T-cell (primary cell): ENCODE measurements at regions of chr2 and their contacts with region 1.

Region 1: GRCh38 chr2:42132966-42133641 is 36.0 kb upstream of the EML4 start:
- DNase-seq: peak; percentile 74 to 95 (median 89)
- ATAC-seq: peak; percentile 88 to 92 (median 90)
- H3K4me3 ChIP-seq: peak overlapping the region; percentile 38 to 42
- H3K4me3 Mint-ChIP-seq: peak overlapping the region; percentile 66 to 74 (median 71)
- H3K27ac ChIP-seq: peak overlapping the region; percentile 99
- H3K27ac Mint-ChIP-seq: peak overlapping the region; percentile 99
- H3K4me1 ChIP-seq: peaks cover 72 to 91% of the 10 kb centered on the region in 2 experiments
- H3K4me1 Mint-ChIP-seq: peaks cover 90 to 98% (median 94%) of the 10 kb centered on the region in 3 donors
- H3K27me3 ChIP-seq: no peaks in the 10 kb centered on the region
- H3K27me3 Mint-ChIP-seq: no peaks in the 10 kb centered on the region

Region 2: DNA sequence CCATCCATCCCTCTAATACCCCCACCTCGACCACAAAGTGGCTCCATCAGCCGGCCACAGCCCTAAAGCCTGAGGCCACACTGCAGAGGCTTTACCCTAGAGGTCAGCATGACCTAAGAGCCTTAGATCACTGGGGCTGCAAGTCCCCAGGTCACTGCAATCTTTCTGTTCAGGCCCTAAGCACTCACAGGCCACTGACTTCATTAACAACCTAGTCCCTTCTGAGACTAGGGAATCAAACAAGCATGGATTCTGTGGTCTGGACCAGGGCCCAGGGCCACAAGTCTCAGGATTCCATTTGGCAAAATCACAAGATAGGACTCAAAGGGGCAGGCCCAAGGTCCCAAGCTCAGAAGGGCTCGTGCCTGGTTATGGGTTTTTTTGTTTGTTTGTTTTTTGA is 122.3 kb before region 1 on chr2:
- CTCF ChIA-PET with region 1: no interaction called
- POLR2A ChIA-PET with region 1: no interaction called
- DNase-seq: no peak
- ATAC-seq: no peak
- H3K4me3 ChIP-seq: no peak overlapping the region
- H3K4me3 Mint-ChIP-seq: no peak overlapping the region
- H3K27ac ChIP-seq: no peak overlapping the region
- H3K27ac Mint-ChIP-seq: no peak overlapping the region
- H3K4me1 ChIP-seq: peaks cover 0 to 14% of the 10 kb centered on the region in 2 experiments
- H3K4me1 Mint-ChIP-seq: peaks cover 16 to 21% (median 20%) of the 10 kb centered on the region in 3 donors
- H3K27me3 ChIP-seq: peaks cover 0 to 13% of the 10 kb centered on the region in 2 experiments
- H3K27me3 Mint-ChIP-seq: peaks cover 9 to 10% of the 10 kb centered on the region in 2 donors

Region 3: GRCh38 chr2:42102024-42102590 is 31.0 kb before region 1 on chr2:
- CTCF ChIA-PET with region 1: interaction called, 4 to 42 read pairs
- POLR2A ChIA-PET with region 1: interaction called, 4 to 38 read pairs
- DNase-seq: peak; percentile 79 to 98 (median 96)
- ATAC-seq: peak; percentile 68 to 81 (median 70)
- H3K4me3 ChIP-seq: peak overlapping the region in 1 of 2 donors; percentile 46
- H3K4me3 Mint-ChIP-seq: peak overlapping the region in 2 of 3 donors; percentile 83
- H3K27ac ChIP-seq: peak overlapping the region; percentile 99
- H3K27ac Mint-ChIP-seq: no peak overlapping the region
- H3K4me1 ChIP-seq: peaks cover 66 to 97% of the 10 kb centered on the region in 2 experiments
- H3K4me1 Mint-ChIP-seq: peaks cover 48% of the 10 kb centered on the region in 3 donors
- H3K27me3 ChIP-seq: no peaks in the 10 kb centered on the region
- H3K27me3 Mint-ChIP-seq: no peaks in the 10 kb centered on the region

Region 4: DNA sequence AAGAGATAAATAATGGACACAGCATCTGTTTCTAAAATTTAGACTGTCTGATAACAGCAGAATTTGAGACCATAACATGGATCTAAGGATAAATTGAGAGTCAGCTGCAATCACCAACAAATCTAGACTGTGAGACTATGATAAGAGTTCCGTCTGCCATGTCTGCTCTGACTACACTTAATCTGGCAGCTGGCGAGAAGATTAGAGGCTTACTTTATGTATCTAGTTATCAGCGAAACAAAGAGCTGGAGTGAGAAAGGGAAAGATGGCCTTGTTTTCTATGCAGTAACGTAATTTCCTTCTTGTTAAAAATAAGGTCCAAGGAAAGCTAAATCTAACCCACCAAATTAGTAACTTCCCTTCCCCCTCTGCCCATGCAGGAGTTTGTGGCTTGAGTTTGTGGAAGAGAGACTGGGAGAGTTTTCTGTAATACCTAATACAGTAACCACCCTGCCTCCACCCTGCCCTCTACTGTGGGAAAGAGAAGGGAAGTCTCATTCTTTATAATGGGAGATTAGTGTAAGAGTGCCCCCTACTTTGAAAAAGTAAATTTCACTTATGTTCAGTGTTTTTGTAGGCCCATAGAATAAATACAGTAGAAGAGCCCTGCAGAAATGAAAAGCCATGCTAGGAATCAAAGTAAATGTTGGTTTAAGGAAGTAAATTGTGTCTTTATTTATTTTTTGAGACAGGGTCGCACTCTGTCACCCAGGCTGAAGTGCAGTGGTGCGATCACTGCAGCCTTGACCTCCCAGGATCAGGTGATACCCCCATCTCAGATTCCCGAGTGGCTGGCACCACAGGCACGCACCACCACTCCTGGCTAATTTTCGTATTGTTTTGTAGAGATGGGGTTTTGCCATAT is 63.5 kb after region 1 on chr2:
- CTCF ChIA-PET with region 1: interaction called, 5 to 14 read pairs
- POLR2A ChIA-PET with region 1: interaction called in 1 of 2 experiments, 3 read pairs
- DNase-seq: peak in 34 of 35 experiments; percentile 4 to 72 (median 36)
- ATAC-seq: peak; percentile 78 to 83 (median 82)
- H3K4me3 ChIP-seq: no peak overlapping the region
- H3K4me3 Mint-ChIP-seq: peak overlapping the region in 1 of 3 donors; percentile 41
- H3K27ac ChIP-seq: peak overlapping the region; percentile 1
- H3K27ac Mint-ChIP-seq: peak overlapping the region; percentile 35 to 65
- H3K4me1 ChIP-seq: peaks cover 24 to 40% of the 10 kb centered on the region in 2 experiments
- H3K4me1 Mint-ChIP-seq: peaks cover 85 to 87% (median 86%) of the 10 kb centered on the region in 3 donors
- H3K27me3 ChIP-seq: no peaks in the 10 kb centered on the region
- H3K27me3 Mint-ChIP-seq: no peaks in the 10 kb centered on the region